ENCODE measurements at regions of chr21 and their contacts with region 1.

Region 1: DNA sequence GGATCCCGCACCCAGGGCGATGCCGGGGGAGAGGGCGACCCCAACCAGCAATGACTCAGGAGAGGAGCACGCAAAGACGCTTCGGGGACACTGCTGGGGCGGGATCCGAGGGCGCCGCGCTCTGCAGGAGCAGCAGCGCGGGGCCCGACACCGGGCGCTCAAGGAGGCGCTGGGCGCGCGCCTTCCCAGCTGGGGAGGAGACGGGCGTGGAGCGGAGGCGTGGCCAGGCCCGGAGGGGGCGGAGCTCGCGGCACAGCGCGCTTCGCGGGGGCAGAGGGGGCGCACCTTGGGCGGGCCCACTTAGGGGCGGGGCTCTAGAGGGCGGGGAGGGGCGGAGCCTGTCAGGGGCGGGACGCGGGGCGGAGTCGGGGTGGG is 369 bp downstream of the SUMO3 start:
- DNase-seq: peak; percentile 92
- H3K4me3 Mint-ChIP-seq: peak overlapping the region; percentile 66
- H3K27ac Mint-ChIP-seq: no peak overlapping the region
- H3K4me1 Mint-ChIP-seq: peaks cover 7% of the 10 kb centered on the region
- H3K27me3 Mint-ChIP-seq: peaks cover 2% of the 10 kb centered on the region

Region 2: GRCh38 chr21:44338971-44339910 is 478.3 kb before region 1 on chr21 and contains the start of gene CFAP410:
- intact Hi-C with region 1: loop called (anchors 5 kb)
- DNase-seq: peak; percentile 95
- H3K4me3 Mint-ChIP-seq: peak within 1 kb of the TSS; percentile 93
- H3K27ac Mint-ChIP-seq: peak within 1 kb of the TSS; percentile 91
- H3K4me1 Mint-ChIP-seq: peaks cover 19% of the 10 kb centered on the region
- H3K27me3 Mint-ChIP-seq: no peaks in the 10 kb centered on the region
- total RNA-seq, gene CFAP410: 13.8 and 15.2 TPM in 2 replicates

Region 3: DNA sequence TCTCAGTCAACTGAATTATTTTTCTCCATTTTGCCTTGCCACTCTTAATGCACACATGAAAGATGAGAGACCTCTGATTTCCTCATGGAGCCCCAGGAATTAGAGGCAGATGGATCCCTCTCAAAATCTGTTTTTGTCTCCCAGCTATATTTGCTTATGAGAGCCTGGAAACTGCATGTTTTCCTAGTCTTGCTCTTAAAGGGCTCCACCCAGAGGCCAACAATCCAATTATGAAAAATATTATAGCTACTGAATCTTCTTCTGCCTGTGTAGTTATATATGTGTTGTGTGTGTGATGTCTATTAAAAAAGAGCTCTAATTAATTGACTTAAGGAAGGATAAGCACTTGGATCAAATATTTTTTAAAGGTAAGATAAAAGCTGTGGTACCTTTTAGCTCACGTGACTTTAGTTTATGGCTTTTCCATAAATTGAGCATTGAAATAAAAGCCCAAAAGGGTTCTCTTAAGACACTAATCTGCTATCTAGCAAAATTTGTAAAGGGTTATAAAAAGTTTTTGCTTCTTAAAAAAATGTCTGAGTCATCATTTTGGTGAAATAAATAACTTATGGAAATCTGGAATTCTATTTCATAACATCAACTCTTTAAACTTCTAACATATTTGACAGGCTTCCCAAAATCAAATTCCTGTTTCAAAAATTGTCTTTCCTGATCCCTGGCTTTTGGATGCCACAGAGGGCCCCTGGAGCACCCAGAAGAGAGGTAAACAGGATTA is 74.9 kb before region 1 on chr21:
- intact Hi-C with region 1: no loop called
- DNase-seq: no peak
- H3K4me3 Mint-ChIP-seq: no peak overlapping the region
- H3K27ac Mint-ChIP-seq: no peak overlapping the region
- H3K4me1 Mint-ChIP-seq: no peaks in the 10 kb centered on the region
- H3K27me3 Mint-ChIP-seq: peaks cover 5% of the 10 kb centered on the region

Region 4: DNA sequence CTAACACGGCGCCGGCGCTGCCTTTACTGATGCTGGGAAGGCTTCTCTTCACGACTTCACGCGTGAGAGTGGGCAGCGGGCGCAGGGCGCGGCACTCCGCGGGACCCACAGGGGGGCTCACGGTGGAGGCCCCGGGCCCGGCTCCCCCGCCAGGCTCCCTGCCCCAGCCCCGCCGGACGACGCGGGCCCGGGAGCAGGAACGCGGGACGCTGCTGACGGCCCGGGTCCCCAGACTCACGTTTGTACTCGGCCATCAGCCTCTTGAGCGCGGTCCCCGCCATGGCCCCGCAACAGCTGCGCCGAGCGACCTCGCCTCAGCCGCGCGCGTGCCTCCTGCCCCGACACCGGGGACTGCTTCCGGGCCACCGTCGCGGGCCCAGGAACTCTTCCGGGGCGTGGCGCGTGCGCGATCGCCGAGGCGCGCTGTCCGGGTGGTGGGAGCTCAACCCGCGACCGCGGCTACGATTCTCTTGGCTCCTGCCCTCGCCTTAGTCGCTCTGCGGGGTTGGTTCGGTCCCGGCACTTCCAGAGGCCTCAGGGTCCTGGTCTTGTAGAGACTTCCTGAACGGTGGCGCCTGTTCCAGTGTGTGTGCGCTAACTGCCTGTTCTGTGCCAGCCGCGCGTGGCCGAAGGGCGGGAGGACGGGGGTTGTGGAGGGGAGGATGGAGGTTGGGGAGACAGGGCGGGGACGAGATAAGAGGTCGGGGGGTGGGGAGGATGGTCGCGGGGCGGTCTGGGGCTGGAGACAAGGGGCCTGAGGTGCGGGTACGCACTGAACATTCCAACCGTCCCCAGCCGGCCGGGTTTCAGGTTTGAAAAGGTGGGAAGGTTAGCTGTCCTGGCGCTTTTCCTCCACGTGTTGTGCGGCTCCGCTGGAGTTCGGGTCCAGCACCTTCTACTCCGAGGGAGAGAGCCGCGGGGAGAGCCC is 15.8 kb before region 1 on chr21 and contains the start of gene UBE2G2:
- intact Hi-C with region 1: loop called (anchors 1 kb)
- DNase-seq: peak; percentile 86
- H3K4me3 Mint-ChIP-seq: peak within 1 kb of the TSS; percentile 98
- H3K27ac Mint-ChIP-seq: peak within 1 kb of the TSS; percentile 85
- H3K4me1 Mint-ChIP-seq: peaks cover 43% of the 10 kb centered on the region
- H3K27me3 Mint-ChIP-seq: no peaks in the 10 kb centered on the region
- total RNA-seq, gene UBE2G2: 118 and 119 TPM in 2 replicates

Region 5: DNA sequence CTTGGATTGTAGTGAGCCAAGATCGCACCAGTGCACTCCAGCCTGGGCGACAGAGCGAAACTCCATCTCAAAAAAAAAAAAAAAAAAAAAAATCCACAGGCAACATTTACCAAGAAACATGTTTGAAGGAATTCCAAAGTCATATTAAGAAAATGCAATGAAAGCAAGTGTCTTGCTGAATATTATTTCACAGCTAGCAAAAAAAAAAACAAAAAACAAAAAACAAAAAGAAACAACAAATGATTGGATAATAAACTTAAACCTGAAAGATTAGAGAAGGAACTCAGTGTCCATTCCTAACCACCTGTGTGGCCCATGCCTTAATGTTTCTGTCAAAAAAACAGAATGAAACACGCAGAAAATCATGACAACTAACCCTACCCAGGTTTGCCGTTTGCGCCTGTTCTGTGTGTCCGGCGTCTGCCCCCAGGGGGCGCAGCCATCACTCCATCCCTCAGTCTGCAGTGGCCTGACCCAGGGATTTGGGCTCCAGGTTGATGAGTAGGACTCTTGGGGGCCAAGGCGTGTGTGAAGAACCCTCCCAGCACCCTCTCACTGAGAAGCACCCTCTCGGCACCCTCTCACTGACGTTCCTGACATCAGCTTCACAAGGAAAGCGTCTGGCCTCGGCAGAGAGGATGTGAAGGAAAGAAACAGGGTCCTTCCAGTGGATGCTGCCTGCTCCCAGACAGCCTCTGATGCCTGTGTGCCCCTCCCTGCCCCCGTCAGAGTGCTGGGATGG is 75.2 kb after region 1 on chr21:
- intact Hi-C with region 1: no loop called
- DNase-seq: peak; percentile 68
- H3K4me3 Mint-ChIP-seq: no peak overlapping the region
- H3K27ac Mint-ChIP-seq: no peak overlapping the region
- H3K4me1 Mint-ChIP-seq: peaks cover 5% of the 10 kb centered on the region
- H3K27me3 Mint-ChIP-seq: no peaks in the 10 kb centered on the region

Region 6: GRCh38 chr21:46184625-46185555 is 1367.4 kb after region 1 on chr21:
- intact Hi-C with region 1: loop called (anchors 5 kb)
- DNase-seq: peak; percentile 78
- H3K4me3 Mint-ChIP-seq: peak overlapping the region; percentile 86
- H3K27ac Mint-ChIP-seq: peak overlapping the region; percentile 90
- H3K4me1 Mint-ChIP-seq: peaks cover 7% of the 10 kb centered on the region
- H3K27me3 Mint-ChIP-seq: no peaks in the 10 kb centered on the region